H1 (cell line): ENCODE measurements at regions of chr2 and their contacts with region 1.

Region 1: GRCh38 chr2:72887754-72888437 is 688 bp downstream of the SPR start:
- DNase-seq: peak; percentile 81 to 96
- H3K4me3 ChIP-seq: peak overlapping the region; percentile 47 to 68 (median 65)
- H3K27ac ChIP-seq: no peak overlapping the region
- H3K4me1 ChIP-seq: peaks cover 0 to 8% (median 1%) of the 10 kb centered on the region in 4 experiments; a peak in 5 of 7 replicates
- H3K27me3 ChIP-seq: peaks cover 4 to 36% (median 24%) of the 10 kb centered on the region in 4 experiments
- CTCF ChIP-seq: peak; percentile 79 to 98 (median 97)
- EP300 ChIP-seq: no peak; a peak in 1 of 3 replicates
- POLR2A ChIP-seq: no peak
- RAD21 ChIP-seq: peak; percentile 41 to 65

Region 2: DNA sequence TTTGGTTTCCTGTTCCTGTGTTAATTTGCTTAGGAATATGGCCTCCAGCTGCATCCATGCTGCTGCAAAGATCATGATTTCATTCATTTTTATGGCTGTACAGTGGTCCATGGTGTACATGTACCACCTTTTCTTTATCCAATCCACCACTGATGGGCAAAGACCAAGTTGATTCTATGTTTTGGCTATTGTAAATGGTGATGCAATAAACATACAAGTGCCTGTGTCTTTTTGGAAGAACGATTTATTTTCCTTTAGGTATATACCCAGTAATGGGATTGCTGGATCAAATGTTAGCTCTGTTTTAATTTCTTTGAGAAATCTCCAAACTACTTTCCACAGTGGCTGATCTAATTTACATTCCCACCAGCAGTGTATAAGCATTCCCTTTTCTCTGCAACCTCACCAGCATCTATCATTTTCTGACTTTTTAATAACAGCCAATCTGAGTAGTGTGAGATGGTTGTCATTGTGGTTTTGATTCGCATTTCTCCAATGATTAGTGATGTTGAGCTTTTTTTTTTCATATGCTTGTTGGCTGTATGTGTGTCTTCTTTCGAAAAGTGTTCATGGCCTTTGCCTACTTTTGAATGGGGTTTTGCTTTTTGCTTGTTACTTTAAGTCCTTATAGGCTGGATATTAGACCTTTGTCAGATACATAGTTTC is 81.5 kb before region 1 on chr2:
- CTCF ChIA-PET with region 1: no interaction called
- POLR2A ChIA-PET with region 1: no interaction called
- DNase-seq: no peak
- H3K4me3 ChIP-seq: no peak overlapping the region
- H3K27ac ChIP-seq: no peak overlapping the region
- H3K4me1 ChIP-seq: no peaks in the 10 kb centered on the region
- H3K27me3 ChIP-seq: no peaks in the 10 kb centered on the region
- CTCF ChIP-seq: no peak
- EP300 ChIP-seq: no peak
- POLR2A ChIP-seq: no peak
- RAD21 ChIP-seq: no peak

Region 3: GRCh38 chr2:72862239-72862988 is 25.5 kb before region 1 on chr2:
- CTCF ChIA-PET with region 1: interaction called, 19 read pairs
- POLR2A ChIA-PET with region 1: no interaction called
- DNase-seq: peak; percentile 91 to 98
- H3K4me3 ChIP-seq: peak overlapping the region; percentile 21 to 62 (median 54); a peak in 7 of 8 replicates
- H3K27ac ChIP-seq: no peak overlapping the region
- H3K4me1 ChIP-seq: peaks cover 0 to 3% (median 0%) of the 10 kb centered on the region in 4 experiments; a peak in 1 of 7 replicates
- H3K27me3 ChIP-seq: peaks cover 0 to 3% (median 0%) of the 10 kb centered on the region in 4 experiments; a peak in 2 of 7 replicates
- CTCF ChIP-seq: peak; percentile 98 to 100 (median 100)
- EP300 ChIP-seq: no peak; a peak in 1 of 3 replicates
- POLR2A ChIP-seq: peak in 1 of 2 experiments; percentile 62; a peak in 1 of 3 replicates
- RAD21 ChIP-seq: peak; percentile 84 to 88

Region 4: GRCh38 chr2:72934683-72935610 is 47.1 kb after region 1 on chr2:
- CTCF ChIA-PET with region 1: interaction called, 490 read pairs
- POLR2A ChIA-PET with region 1: interaction called, 3 read pairs
- DNase-seq: no peak
- H3K4me3 ChIP-seq: no peak overlapping the region
- H3K27ac ChIP-seq: no peak overlapping the region
- H3K4me1 ChIP-seq: peaks cover 0 to 16% (median 9%) of the 10 kb centered on the region in 4 experiments; a peak in 5 of 7 replicates
- H3K27me3 ChIP-seq: peaks cover 0 to 19% (median 10%) of the 10 kb centered on the region in 4 experiments; a peak in 3 of 7 replicates
- CTCF ChIP-seq: peak in 2 of 3 experiments; percentile 77 to 79; a peak in 3 of 4 replicates
- EP300 ChIP-seq: no peak
- POLR2A ChIP-seq: no peak
- RAD21 ChIP-seq: peak; percentile 79 to 80

Region 5: GRCh38 chr2:72980535-72981217 is 92.8 kb after region 1 on chr2:
- CTCF ChIA-PET with region 1: interaction called, 113 read pairs
- POLR2A ChIA-PET with region 1: no interaction called
- DNase-seq: no peak
- H3K4me3 ChIP-seq: no peak overlapping the region
- H3K27ac ChIP-seq: no peak overlapping the region
- H3K4me1 ChIP-seq: peaks cover 0 to 4% (median under 1%) of the 10 kb centered on the region in 4 experiments; a peak in 4 of 7 replicates
- H3K27me3 ChIP-seq: 0 out of 7 replicates have a peak, but pooled peaks cover 0 to 2% (median 0%) of the 10 kb centered on the region in 4 experiments
- CTCF ChIP-seq: no peak
- EP300 ChIP-seq: no peak
- POLR2A ChIP-seq: no peak
- RAD21 ChIP-seq: no peak

Region 6: GRCh38 chr2:73035899-73036711 is 148.2 kb after region 1 on chr2:
- CTCF ChIA-PET with region 1: interaction called, 11 read pairs
- POLR2A ChIA-PET with region 1: no interaction called
- DNase-seq: peak in 1 of 2 experiments; percentile 67
- H3K4me3 ChIP-seq: no peak overlapping the region
- H3K27ac ChIP-seq: peak overlapping the region; percentile 21
- H3K4me1 ChIP-seq: peaks cover 0 to 16% (median 8%) of the 10 kb centered on the region in 4 experiments; a peak in 5 of 7 replicates
- H3K27me3 ChIP-seq: no peaks in the 10 kb centered on the region
- CTCF ChIP-seq: peak; percentile 75 to 91 (median 81)
- EP300 ChIP-seq: no peak
- POLR2A ChIP-seq: no peak
- RAD21 ChIP-seq: peak; percentile 30 to 40; a peak in 3 of 4 replicates

Region 7: GRCh38 chr2:73163483-73164367 is 275.8 kb after region 1 on chr2:
- CTCF ChIA-PET with region 1: interaction called, 15 read pairs
- POLR2A ChIA-PET with region 1: no interaction called
- DNase-seq: peak; percentile 63 to 92
- H3K4me3 ChIP-seq: no peak overlapping the region
- H3K27ac ChIP-seq: no peak overlapping the region
- H3K4me1 ChIP-seq: no peaks in the 10 kb centered on the region
- H3K27me3 ChIP-seq: no peaks in the 10 kb centered on the region
- CTCF ChIP-seq: peak; percentile 87 to 91 (median 89)
- EP300 ChIP-seq: no peak
- POLR2A ChIP-seq: no peak
- RAD21 ChIP-seq: peak; percentile 91